ENCODE measurements at regions of chr3 and their contacts with region 1.

Region 1: GRCh38 chr3:171459942-171460724 is at the start of gene TNIK:
- DNase-seq: peak; percentile 91 to 99 (median 93)
- H3K4me3 ChIP-seq: peak within 1 kb of the TSS; percentile 92 to 93
- H3K4me3 Mint-ChIP-seq: peak within 1 kb of the TSS; percentile 91 to 99 (median 96)
- H3K27ac ChIP-seq: peak within 1 kb of the TSS; percentile 75
- H3K27ac Mint-ChIP-seq: peak within 1 kb of the TSS; percentile 88 to 98 (median 96)
- H3K4me1 ChIP-seq: peaks cover 42% of the 10 kb centered on the region
- H3K4me1 Mint-ChIP-seq: peaks cover 24 to 31% (median 29%) of the 10 kb centered on the region in 4 donors
- H3K27me3 ChIP-seq: no peaks in the 10 kb centered on the region
- H3K27me3 Mint-ChIP-seq: no peaks in the 10 kb centered on the region
- total RNA-seq, gene TNIK: 86.3 to 93.5 TPM

Region 2: GRCh38 chr3:171187706-171188290 is 272.3 kb before region 1 on chr3:
- CTCF ChIA-PET with region 1: interaction called, 13 read pairs
- POLR2A ChIA-PET with region 1: interaction called, 4 read pairs
- intact Hi-C with region 1: loop called (anchors 1 kb)
- DNase-seq: peak; percentile 25 to 37 (median 31)
- H3K4me3 ChIP-seq: no peak overlapping the region
- H3K4me3 Mint-ChIP-seq: no peak overlapping the region
- H3K27ac ChIP-seq: no peak overlapping the region
- H3K27ac Mint-ChIP-seq: no peak overlapping the region
- H3K4me1 ChIP-seq: peaks cover 21% of the 10 kb centered on the region
- H3K4me1 Mint-ChIP-seq: peaks cover 28 to 34% (median 31%) of the 10 kb centered on the region in 4 donors
- H3K27me3 ChIP-seq: no peaks in the 10 kb centered on the region
- H3K27me3 Mint-ChIP-seq: no peaks in the 10 kb centered on the region

Region 3: DNA sequence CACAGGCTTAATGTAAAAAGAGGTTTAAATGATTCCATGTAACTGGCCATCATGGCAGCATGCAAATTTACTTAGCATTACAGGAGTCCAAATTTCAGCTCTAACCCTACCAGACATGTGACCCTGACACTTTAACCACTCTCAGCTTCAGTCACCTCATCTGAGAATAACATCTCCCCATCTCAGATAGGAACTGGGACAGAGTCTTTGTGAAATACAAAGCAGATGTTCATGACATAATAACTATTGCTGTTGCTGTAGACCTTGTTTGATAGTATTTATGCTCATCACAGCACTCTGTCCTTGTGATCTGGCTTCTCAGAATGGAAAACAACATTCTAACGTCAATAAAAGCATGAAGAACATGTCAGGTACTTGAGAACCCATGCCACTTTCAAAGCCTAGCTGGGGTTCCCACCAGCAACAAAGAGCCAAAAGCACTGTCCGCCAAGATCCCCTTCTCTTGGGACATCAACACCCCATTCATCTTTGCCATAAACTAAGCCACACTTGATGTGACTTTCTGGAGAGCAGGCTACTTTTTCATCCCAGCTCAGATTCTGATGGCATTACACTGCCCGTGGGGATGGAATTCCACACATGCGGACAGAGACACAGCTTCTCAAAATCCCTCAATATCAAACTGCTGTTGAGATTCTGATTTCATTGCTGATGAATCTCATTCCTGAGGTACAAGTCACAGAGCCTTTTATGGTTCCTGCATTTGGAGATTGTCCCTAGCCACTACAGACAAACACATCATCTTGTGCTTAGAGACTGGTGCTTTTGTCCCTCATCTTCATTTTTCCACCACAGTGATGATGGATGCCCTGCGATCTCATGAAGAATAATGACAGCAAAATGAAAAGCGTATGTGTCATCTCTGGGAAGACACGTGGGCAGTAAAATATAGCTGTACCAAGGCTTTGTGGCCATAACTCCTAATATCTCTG is 202.6 kb before region 1 on chr3:
- CTCF ChIA-PET with region 1: interaction called, 4 read pairs
- POLR2A ChIA-PET with region 1: interaction called, 11 read pairs
- intact Hi-C with region 1: loop called (anchors 5 kb)
- DNase-seq: peak in 2 of 5 donors; percentile 31 to 33
- H3K4me3 ChIP-seq: peak overlapping the region in 1 of 2 donors; percentile 9
- H3K4me3 Mint-ChIP-seq: peak overlapping the region in 7 of 8 donors; percentile 32 to 87 (median 52)
- H3K27ac ChIP-seq: peak overlapping the region; percentile 68
- H3K27ac Mint-ChIP-seq: peak overlapping the region in 6 of 7 donors; percentile 90 to 97 (median 96)
- H3K4me1 ChIP-seq: peaks cover 99% of the 10 kb centered on the region
- H3K4me1 Mint-ChIP-seq: peaks cover 80 to 97% (median 88%) of the 10 kb centered on the region in 4 donors
- H3K27me3 ChIP-seq: no peaks in the 10 kb centered on the region
- H3K27me3 Mint-ChIP-seq: no peaks in the 10 kb centered on the region

Region 4: GRCh38 chr3:171447338-171447760 is 12.8 kb before region 1 on chr3:
- CTCF ChIA-PET with region 1: interaction called, 5 read pairs
- POLR2A ChIA-PET with region 1: interaction called, 16 read pairs
- intact Hi-C with region 1: no loop called
- DNase-seq: no peak
- H3K4me3 ChIP-seq: no peak overlapping the region
- H3K4me3 Mint-ChIP-seq: peak overlapping the region in 2 of 8 donors; percentile 10 to 26
- H3K27ac ChIP-seq: no peak overlapping the region
- H3K27ac Mint-ChIP-seq: no peak overlapping the region
- H3K4me1 ChIP-seq: peaks cover 79% of the 10 kb centered on the region
- H3K4me1 Mint-ChIP-seq: peaks cover 43 to 63% (median 52%) of the 10 kb centered on the region in 4 donors
- H3K27me3 ChIP-seq: no peaks in the 10 kb centered on the region
- H3K27me3 Mint-ChIP-seq: no peaks in the 10 kb centered on the region

Region 5: GRCh38 chr3:171491361-171491760 is 31.2 kb after region 1 on chr3:
- CTCF ChIA-PET with region 1: interaction called, 4 read pairs
- POLR2A ChIA-PET with region 1: interaction called, 54 read pairs
- intact Hi-C with region 1: loop called (anchors 1 kb)
- DNase-seq: peak in 4 of 5 donors; percentile 31 to 56 (median 43)
- H3K4me3 ChIP-seq: peak overlapping the region; percentile 14 to 25
- H3K4me3 Mint-ChIP-seq: peak overlapping the region; percentile 27 to 81 (median 72)
- H3K27ac ChIP-seq: no peak overlapping the region
- H3K27ac Mint-ChIP-seq: peak overlapping the region; percentile 10 to 93 (median 80)
- H3K4me1 ChIP-seq: peaks cover 50% of the 10 kb centered on the region
- H3K4me1 Mint-ChIP-seq: peaks cover 30 to 55% (median 43%) of the 10 kb centered on the region in 4 donors
- H3K27me3 ChIP-seq: no peaks in the 10 kb centered on the region
- H3K27me3 Mint-ChIP-seq: no peaks in the 10 kb centered on the region

Region 6: GRCh38 chr3:171522651-171523050 is 62.5 kb after region 1 on chr3:
- CTCF ChIA-PET with region 1: no interaction called
- POLR2A ChIA-PET with region 1: no interaction called
- intact Hi-C with region 1: no loop called
- DNase-seq: no peak
- H3K4me3 ChIP-seq: no peak overlapping the region
- H3K4me3 Mint-ChIP-seq: no peak overlapping the region
- H3K27ac ChIP-seq: no peak overlapping the region
- H3K27ac Mint-ChIP-seq: no peak overlapping the region
- H3K4me1 ChIP-seq: no peaks in the 10 kb centered on the region
- H3K4me1 Mint-ChIP-seq: peaks cover 0 to 2% (median 0%) of the 10 kb centered on the region in 4 donors
- H3K27me3 ChIP-seq: no peaks in the 10 kb centered on the region
- H3K27me3 Mint-ChIP-seq: peaks cover 0 to 1% of the 10 kb centered on the region in 2 donors

Region 7: DNA sequence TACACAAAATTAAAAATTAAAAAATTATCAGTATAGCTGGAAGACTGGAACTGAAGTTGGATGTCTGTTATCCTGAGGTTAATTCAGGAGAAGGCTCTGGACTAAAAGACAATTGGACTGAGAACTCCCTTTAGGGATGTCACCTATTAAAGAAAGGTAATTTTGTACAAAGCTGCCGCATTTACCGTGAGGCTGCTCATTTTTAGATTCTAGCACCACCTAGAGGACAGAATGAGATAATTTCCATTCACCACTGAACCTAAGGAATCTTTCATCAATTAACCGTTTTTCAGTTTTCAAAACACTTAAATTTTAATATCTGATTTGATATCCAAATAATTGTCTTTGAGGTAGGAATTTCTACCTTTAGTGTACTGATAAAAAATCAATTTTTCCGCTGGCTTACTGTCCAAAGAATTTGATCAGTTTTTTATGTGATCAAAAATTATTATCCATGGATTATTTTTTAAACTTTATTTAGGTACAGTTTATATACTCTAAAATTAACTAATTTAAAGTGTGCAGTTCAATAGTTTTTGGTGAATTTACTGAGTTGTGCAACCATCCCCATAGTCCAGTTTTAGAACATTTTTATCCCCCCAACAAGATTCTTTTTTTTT is 106.8 kb after region 1 on chr3:
- CTCF ChIA-PET with region 1: interaction called, 13 read pairs
- POLR2A ChIA-PET with region 1: interaction called, 10 read pairs
- intact Hi-C with region 1: loop called (anchors 2 kb)
- DNase-seq: peak in 4 of 5 donors; percentile 52 to 63 (median 59)
- H3K4me3 ChIP-seq: no peak overlapping the region
- H3K4me3 Mint-ChIP-seq: no peak overlapping the region
- H3K27ac ChIP-seq: no peak overlapping the region
- H3K27ac Mint-ChIP-seq: no peak overlapping the region
- H3K4me1 ChIP-seq: peaks cover 10% of the 10 kb centered on the region
- H3K4me1 Mint-ChIP-seq: peaks cover 3 to 7% (median 5%) of the 10 kb centered on the region in 4 donors
- H3K27me3 ChIP-seq: no peaks in the 10 kb centered on the region
- H3K27me3 Mint-ChIP-seq: peaks cover 2 to 3% of the 10 kb centered on the region in 2 donors